ENCODE measurements at regions of chr4 and their contacts with region 1.

Region 1: GRCh38 chr4:21113496-21114223 is 413.4 kb downstream of the PACRGL start:
- DNase-seq: no peak

Region 2: GRCh38 chr4:20778896-20779295 is 334.8 kb before region 1 on chr4:
- intact Hi-C with region 1: loop called in 1 of 2 experiments (anchors 5 kb)
- DNase-seq: no peak

Region 3: GRCh38 chr4:22356987-22357596 is 1243.4 kb after region 1 on chr4:
- intact Hi-C with region 1: no loop called
- DNase-seq: no peak

Measured in posterior vena cava (tissue), 2 donors.